Heart right ventricle (tissue), 16 donors: ENCODE measurements at regions of chr13 and their contacts with region 1.

Region 1: DNA sequence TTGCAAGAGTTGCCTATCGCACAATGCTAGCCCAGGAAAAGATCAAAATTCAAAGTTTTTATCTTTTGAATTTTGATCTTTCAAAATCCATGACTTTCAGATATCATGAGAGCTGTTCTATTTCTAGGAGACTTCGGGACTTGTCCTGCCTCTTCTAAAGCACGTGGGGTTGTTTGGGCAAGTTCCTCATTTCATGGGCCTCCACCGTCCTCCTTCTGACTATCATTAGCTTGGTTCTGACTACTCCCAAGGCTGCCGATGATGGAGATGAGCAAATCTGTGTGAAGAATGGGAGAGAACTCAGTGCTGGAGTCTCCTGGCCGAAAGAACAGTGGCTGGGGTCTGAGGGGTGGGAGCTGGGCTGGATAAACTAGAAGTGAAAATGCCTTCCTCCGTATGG is 86.5 kb downstream of the COL4A1 start:
- DNase-seq: no peak
- ATAC-seq: no peak
- H3K4me3 ChIP-seq: no peak overlapping the region
- H3K27ac ChIP-seq: peak overlapping the region in 8 of 10 donors; percentile 32 to 90 (median 85)
- H3K4me1 ChIP-seq: peaks cover 8 to 94% (median 75%) of the 10 kb centered on the region in 9 donors
- H3K27me3 ChIP-seq: no peaks in the 10 kb centered on the region
- CTCF ChIP-seq: no peak

Region 2: DNA sequence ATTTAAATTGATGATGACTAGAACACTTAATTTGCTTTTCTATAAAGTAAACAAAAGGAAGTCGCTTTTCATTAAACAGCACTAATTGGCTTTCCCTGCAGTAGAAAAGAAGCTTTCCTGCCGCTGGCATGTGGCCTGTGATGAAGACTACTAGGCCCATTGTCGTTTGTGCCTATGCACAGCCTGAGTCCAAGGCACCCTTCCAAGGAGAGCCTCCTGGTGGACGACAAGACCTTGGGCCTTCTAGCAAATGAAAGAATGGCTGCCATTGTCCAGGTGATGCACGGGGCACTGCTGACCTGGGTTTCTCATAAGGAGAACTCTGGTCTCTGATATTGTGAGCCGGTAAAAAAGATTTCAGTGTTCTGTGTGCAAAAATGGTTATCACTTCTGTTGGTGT is 146.5 kb before region 1 on chr13:
- intact Hi-C with region 1: no loop called
- DNase-seq: no peak
- ATAC-seq: no peak
- H3K4me3 ChIP-seq: no peak overlapping the region
- H3K27ac ChIP-seq: no peak overlapping the region
- H3K4me1 ChIP-seq: no peaks in the 10 kb centered on the region
- H3K27me3 ChIP-seq: no peaks in the 10 kb centered on the region
- CTCF ChIP-seq: no peak

Region 3: DNA sequence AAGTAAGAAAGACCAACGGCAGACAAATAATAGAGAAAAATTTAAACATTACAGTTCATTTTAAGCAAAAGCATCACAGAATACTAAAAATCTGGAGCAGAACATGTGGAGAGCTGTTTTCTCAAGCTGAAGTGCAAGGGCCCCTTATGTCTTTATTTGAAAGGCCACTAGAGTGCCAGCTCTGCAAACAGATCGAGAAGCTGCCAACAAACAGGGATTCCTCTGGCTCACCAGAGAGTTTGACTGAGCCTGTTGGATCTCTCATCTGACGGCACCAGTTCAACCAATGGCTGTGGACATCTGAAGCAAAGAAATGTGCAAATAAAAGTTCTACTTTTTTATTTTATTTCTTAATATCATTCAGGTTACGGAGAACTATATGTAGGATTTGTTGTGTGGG is 206.3 kb after region 1 on chr13:
- intact Hi-C with region 1: loop called in 3 of 10 experiments (anchors 5 kb)
- DNase-seq: peak in 1 of 2 donors; percentile 49
- ATAC-seq: peak in 4 of 8 donors; percentile 41 to 54 (median 49)
- H3K4me3 ChIP-seq: no peak overlapping the region
- H3K27ac ChIP-seq: peak overlapping the region in 1 of 10 donors; percentile 30
- H3K4me1 ChIP-seq: peaks cover 0 to 56% (median 30%) of the 10 kb centered on the region in 9 donors
- H3K27me3 ChIP-seq: peaks cover 0 to 12% (median 0%) of the 10 kb centered on the region in 7 donors
- CTCF ChIP-seq: no peak

Region 4: GRCh38 chr13:110433014-110433413 is 212.5 kb after region 1 on chr13:
- intact Hi-C with region 1: loop called in 4 of 10 experiments (anchors 5 kb)
- DNase-seq: peak; percentile 56 to 73
- ATAC-seq: peak; percentile 56 to 83 (median 72)
- H3K4me3 ChIP-seq: no peak overlapping the region
- H3K27ac ChIP-seq: peak overlapping the region in 9 of 10 donors; percentile 17 to 73 (median 51)
- H3K4me1 ChIP-seq: peaks cover 0 to 60% (median 30%) of the 10 kb centered on the region in 9 donors
- H3K27me3 ChIP-seq: no peaks in the 10 kb centered on the region
- CTCF ChIP-seq: no peak

Region 5: GRCh38 chr13:110444226-110444653 is 223.8 kb after region 1 on chr13:
- intact Hi-C with region 1: loop called in 4 of 10 experiments (anchors 1 to 5 kb)
- DNase-seq: no peak
- ATAC-seq: peak; percentile 41 to 83 (median 66)
- H3K4me3 ChIP-seq: no peak overlapping the region
- H3K27ac ChIP-seq: peak overlapping the region in 5 of 10 donors; percentile 6 to 44 (median 34)
- H3K4me1 ChIP-seq: peaks cover 0 to 20% (median 3%) of the 10 kb centered on the region in 9 donors
- H3K27me3 ChIP-seq: no peaks in the 10 kb centered on the region
- CTCF ChIP-seq: peak in 7 of 9 donors; percentile 25 to 55 (median 52)

Region 6: DNA sequence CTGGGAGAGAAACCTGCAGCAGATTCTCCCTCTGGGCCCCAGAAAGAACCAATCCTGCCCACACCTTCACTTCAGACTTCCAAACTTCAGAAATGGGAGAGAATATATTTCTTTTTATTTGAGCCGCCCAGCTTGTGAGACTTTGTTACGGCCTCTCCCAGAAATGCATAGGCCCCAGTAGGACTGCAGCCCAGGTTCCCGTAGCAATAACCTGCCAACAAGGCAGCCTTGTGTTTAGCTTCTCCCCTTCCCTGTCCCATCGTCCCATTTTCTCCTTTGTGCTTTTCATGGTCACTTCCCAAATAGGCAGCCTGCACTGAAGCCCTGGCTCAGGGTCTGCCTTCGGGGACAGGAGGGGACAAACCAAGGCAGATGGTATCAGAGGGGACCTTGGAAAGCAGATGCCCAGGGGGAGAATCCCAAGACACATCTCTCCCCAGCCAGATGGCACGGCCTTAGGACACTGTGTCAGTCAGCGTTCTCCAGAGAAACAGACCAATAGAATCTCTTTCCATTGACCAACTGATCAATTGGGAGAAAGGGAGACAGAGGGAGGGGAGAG is 891.0 kb after region 1 on chr13:
- intact Hi-C with region 1: no loop called
- DNase-seq: no peak
- ATAC-seq: no peak
- H3K4me3 ChIP-seq: no peak overlapping the region
- H3K27ac ChIP-seq: no peak overlapping the region
- H3K4me1 ChIP-seq: peaks cover 0 to 17% (median 11%) of the 10 kb centered on the region in 9 donors
- H3K27me3 ChIP-seq: peaks cover 0 to 59% (median 37%) of the 10 kb centered on the region in 7 donors
- CTCF ChIP-seq: no peak